IMR-90 (cell line): ENCODE measurements at regions of chr6 and their contacts with region 1.

Region 1: GRCh38 chr6:33454009-33454946 is at the start of gene ZBTB9:
- DNase-seq: peak; percentile 96
- ATAC-seq: peak; percentile 99
- H3K4me3 ChIP-seq: peak within 1 kb of the TSS; percentile 73
- H3K27ac ChIP-seq: peak within 1 kb of the TSS; percentile 72
- H3K4me1 ChIP-seq: peaks cover 4% of the 10 kb centered on the region
- H3K27me3 ChIP-seq: no peaks in the 10 kb centered on the region
- CTCF ChIP-seq: no peak
- POLR2A ChIP-seq: peak; percentile 89
- RAD21 ChIP-seq: no peak
- total RNA-seq, gene ZBTB9: 5.4 and 5.6 TPM in 2 replicates

Region 2: GRCh38 chr6:33375143-33375671 is 79.1 kb before region 1 on chr6:
- CTCF ChIA-PET with region 1: no interaction called
- POLR2A ChIA-PET with region 1: no interaction called
- dilution Hi-C with region 1: no loop called
- in situ Hi-C with region 1: no loop called
- intact Hi-C with region 1: no loop called
- DNase-seq: peak; percentile 84
- ATAC-seq: peak; percentile 78
- H3K4me3 ChIP-seq: no peak overlapping the region
- H3K27ac ChIP-seq: no peak overlapping the region
- H3K4me1 ChIP-seq: no peaks in the 10 kb centered on the region
- H3K27me3 ChIP-seq: peaks cover 2% of the 10 kb centered on the region; the same call in 1 of the 2 replicates
- CTCF ChIP-seq: no peak
- POLR2A ChIP-seq: no peak
- RAD21 ChIP-seq: no peak

Region 3: DNA sequence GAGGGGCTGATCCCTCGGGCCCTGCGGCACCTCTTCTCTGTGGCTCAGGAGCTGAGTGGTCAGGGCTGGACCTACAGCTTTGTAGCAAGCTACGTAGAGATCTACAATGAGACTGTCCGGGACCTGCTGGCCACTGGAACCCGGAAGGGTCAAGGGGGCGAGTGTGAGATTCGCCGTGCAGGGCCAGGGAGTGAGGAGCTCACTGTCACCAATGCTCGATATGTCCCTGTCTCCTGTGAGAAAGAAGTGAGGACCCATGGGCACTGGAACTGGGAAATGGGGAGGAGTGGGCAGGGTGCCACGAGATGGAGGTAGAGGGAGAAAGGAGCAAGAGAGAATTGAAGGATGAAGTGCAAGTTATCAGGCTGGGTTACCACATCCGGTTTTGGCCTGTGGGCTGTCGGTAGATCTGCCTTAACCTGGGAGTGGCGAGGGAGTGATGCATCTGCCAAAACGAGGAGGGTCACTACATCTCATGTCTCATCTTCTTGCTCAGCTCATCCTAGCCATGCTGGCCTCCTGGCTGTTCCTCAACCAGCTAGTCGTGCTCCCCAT is 48.8 kb before region 1 on chr6:
- CTCF ChIA-PET with region 1: no interaction called
- POLR2A ChIA-PET with region 1: no interaction called
- dilution Hi-C with region 1: no loop called
- in situ Hi-C with region 1: no loop called
- intact Hi-C with region 1: no loop called
- DNase-seq: no peak
- ATAC-seq: no peak
- H3K4me3 ChIP-seq: no peak overlapping the region
- H3K27ac ChIP-seq: no peak overlapping the region
- H3K4me1 ChIP-seq: no peaks in the 10 kb centered on the region
- H3K27me3 ChIP-seq: no peaks in the 10 kb centered on the region
- CTCF ChIP-seq: no peak
- POLR2A ChIP-seq: no peak
- RAD21 ChIP-seq: no peak

Region 4: DNA sequence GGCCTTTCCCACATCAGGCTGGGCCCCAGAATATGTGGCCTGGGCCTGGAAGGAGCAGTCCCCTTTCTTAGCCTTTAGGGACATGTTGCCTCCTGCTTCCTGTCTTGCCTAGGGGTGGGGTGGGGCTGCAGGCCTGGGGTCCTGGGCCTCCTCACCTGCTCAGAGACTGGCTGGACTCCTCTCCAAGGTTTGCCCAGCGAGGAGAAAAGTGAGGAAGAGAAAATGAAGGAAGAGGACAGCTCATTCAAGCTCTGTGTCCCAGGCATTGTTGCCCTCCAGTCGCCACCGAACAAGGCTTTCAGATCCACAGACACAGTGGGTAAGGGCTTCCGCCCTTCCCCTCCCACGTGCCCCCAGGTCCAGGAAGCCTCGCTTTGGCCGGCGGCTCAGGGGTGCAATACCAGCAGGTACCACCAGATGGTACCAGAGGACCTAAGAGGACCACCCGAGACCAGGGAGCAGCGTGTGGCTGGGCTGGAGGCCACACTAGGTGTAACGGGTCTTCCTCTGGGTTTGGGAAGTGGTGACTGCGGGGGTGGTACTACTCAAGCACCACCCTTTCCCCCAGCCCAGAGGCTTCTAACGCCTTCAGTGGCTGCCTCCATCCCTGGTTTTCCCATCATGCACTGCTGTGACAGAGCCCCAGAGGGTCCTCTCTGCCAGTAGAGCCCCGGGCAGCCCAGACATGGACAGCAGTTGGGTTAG is 131.3 kb after region 1 on chr6:
- CTCF ChIA-PET with region 1: no interaction called
- POLR2A ChIA-PET with region 1: no interaction called
- dilution Hi-C with region 1: no loop called
- in situ Hi-C with region 1: no loop called
- intact Hi-C with region 1: no loop called
- DNase-seq: peak; percentile 55
- ATAC-seq: peak; percentile 84
- H3K4me3 ChIP-seq: peak overlapping the region; percentile 3; the same call in 1 of the 2 replicates
- H3K27ac ChIP-seq: no peak overlapping the region
- H3K4me1 ChIP-seq: peaks cover 9% of the 10 kb centered on the region
- H3K27me3 ChIP-seq: no peaks in the 10 kb centered on the region
- CTCF ChIP-seq: peak; percentile 92
- POLR2A ChIP-seq: no peak
- RAD21 ChIP-seq: peak; percentile 92

Region 5: GRCh38 chr6:33672808-33673207 is 218.5 kb after region 1 on chr6:
- CTCF ChIA-PET with region 1: no interaction called
- POLR2A ChIA-PET with region 1: no interaction called
- dilution Hi-C with region 1: no loop called
- in situ Hi-C with region 1: no loop called
- intact Hi-C with region 1: loop called (anchors 10 kb)
- DNase-seq: peak; percentile 95
- ATAC-seq: peak; percentile 95
- H3K4me3 ChIP-seq: no peak overlapping the region
- H3K27ac ChIP-seq: no peak overlapping the region
- H3K4me1 ChIP-seq: peaks cover 21% of the 10 kb centered on the region
- H3K27me3 ChIP-seq: no peaks in the 10 kb centered on the region
- CTCF ChIP-seq: peak; percentile 63
- POLR2A ChIP-seq: no peak
- RAD21 ChIP-seq: peak; percentile 54

Region 6: GRCh38 chr6:33700391-33701050 is 246.2 kb after region 1 on chr6:
- CTCF ChIA-PET with region 1: no interaction called
- POLR2A ChIA-PET with region 1: no interaction called
- dilution Hi-C with region 1: no loop called
- in situ Hi-C with region 1: loop called (anchors 10 kb)
- intact Hi-C with region 1: no loop called
- DNase-seq: peak; percentile 70
- ATAC-seq: peak; percentile 80
- H3K4me3 ChIP-seq: no peak overlapping the region
- H3K27ac ChIP-seq: no peak overlapping the region
- H3K4me1 ChIP-seq: peaks cover 11% of the 10 kb centered on the region
- H3K27me3 ChIP-seq: no peaks in the 10 kb centered on the region
- CTCF ChIP-seq: peak; percentile 75
- POLR2A ChIP-seq: no peak
- RAD21 ChIP-seq: peak; percentile 80